ENCODE measurements at regions of chr2 and their contacts with region 1.

Region 1: GRCh38 chr2:192162392-192163042 is 32.2 kb downstream of the TMEFF2 start:
- DNase-seq: peak; percentile 65
- H3K4me3 Mint-ChIP-seq: no peak overlapping the region
- H3K27ac Mint-ChIP-seq: no peak overlapping the region
- H3K4me1 Mint-ChIP-seq: peaks cover 8% of the 10 kb centered on the region
- H3K27me3 Mint-ChIP-seq: peaks cover 10% of the 10 kb centered on the region

Region 2: DNA sequence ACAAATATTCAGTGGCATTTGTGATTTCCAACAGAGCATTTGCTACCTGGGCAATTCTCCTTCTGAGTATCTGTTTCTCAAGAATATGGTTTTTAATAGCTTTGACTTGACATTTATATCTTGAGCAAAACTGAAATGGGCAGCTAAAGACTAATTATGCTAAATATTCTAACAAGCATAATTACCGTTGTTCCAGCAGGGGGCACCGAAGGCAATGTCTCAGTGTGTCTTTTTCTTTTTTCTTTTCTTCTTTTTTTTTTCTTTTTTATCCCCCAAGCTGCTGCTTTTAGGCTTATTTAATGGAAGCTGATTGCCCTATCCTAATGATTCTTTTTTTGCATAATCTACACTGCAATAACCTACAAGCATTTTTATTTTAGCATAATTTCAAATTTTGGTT is 623.4 kb before region 1 on chr2:
- CTCF ChIA-PET with region 1: interaction called, 22 read pairs
- POLR2A ChIA-PET with region 1: no interaction called
- intact Hi-C with region 1: no loop called
- DNase-seq: peak; percentile 33
- H3K4me3 Mint-ChIP-seq: no peak overlapping the region
- H3K27ac Mint-ChIP-seq: no peak overlapping the region
- H3K4me1 Mint-ChIP-seq: no peaks in the 10 kb centered on the region
- H3K27me3 Mint-ChIP-seq: no peaks in the 10 kb centered on the region

Region 3: GRCh38 chr2:191566344-191566743 is 596.2 kb before region 1 on chr2:
- CTCF ChIA-PET with region 1: interaction called, 149 read pairs
- POLR2A ChIA-PET with region 1: no interaction called
- intact Hi-C with region 1: loop called (anchors 1 kb)
- DNase-seq: peak; percentile 75
- H3K4me3 Mint-ChIP-seq: no peak overlapping the region
- H3K27ac Mint-ChIP-seq: no peak overlapping the region
- H3K4me1 Mint-ChIP-seq: peaks cover 21% of the 10 kb centered on the region
- H3K27me3 Mint-ChIP-seq: peaks cover 4% of the 10 kb centered on the region

Region 4: GRCh38 chr2:191758518-191759507 is 403.7 kb before region 1 on chr2:
- CTCF ChIA-PET with region 1: interaction called, 31 read pairs
- POLR2A ChIA-PET with region 1: no interaction called
- intact Hi-C with region 1: loop called (anchors 5 kb)
- DNase-seq: peak; percentile 64
- H3K4me3 Mint-ChIP-seq: no peak overlapping the region
- H3K27ac Mint-ChIP-seq: no peak overlapping the region
- H3K4me1 Mint-ChIP-seq: peaks cover 3% of the 10 kb centered on the region
- H3K27me3 Mint-ChIP-seq: peaks cover 2% of the 10 kb centered on the region

Region 5: DNA sequence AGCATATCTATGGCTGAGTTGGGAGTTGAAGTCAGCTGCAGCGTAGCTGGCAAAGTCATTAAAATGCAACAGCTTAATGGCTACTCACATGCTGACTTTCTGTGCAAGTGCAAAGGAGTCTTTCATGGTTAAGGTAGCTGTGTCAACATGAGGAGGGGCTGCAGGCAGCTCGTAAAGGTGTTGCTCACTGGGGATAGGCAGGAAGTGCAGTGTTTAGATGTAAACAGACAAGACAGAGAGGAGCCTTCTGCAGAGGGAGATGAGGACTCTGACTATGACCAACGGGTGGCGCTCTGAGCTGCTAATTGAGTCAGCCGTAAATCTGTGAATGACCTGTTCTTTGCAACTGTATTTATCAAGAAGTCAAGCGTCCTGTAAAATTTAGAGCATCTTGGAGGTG is 293.3 kb before region 1 on chr2:
- CTCF ChIA-PET with region 1: interaction called, 16 read pairs
- POLR2A ChIA-PET with region 1: no interaction called
- intact Hi-C with region 1: no loop called
- DNase-seq: peak; percentile 13
- H3K4me3 Mint-ChIP-seq: no peak overlapping the region
- H3K27ac Mint-ChIP-seq: no peak overlapping the region
- H3K4me1 Mint-ChIP-seq: no peaks in the 10 kb centered on the region
- H3K27me3 Mint-ChIP-seq: peaks cover 16% of the 10 kb centered on the region

Region 6: GRCh38 chr2:192123847-192124246 is 38.7 kb before region 1 on chr2:
- CTCF ChIA-PET with region 1: no interaction called
- POLR2A ChIA-PET with region 1: no interaction called
- intact Hi-C with region 1: no loop called
- DNase-seq: no peak
- H3K4me3 Mint-ChIP-seq: no peak overlapping the region
- H3K27ac Mint-ChIP-seq: no peak overlapping the region
- H3K4me1 Mint-ChIP-seq: no peaks in the 10 kb centered on the region
- H3K27me3 Mint-ChIP-seq: peaks cover 3% of the 10 kb centered on the region

Region 7: GRCh38 chr2:192148620-192149321 is 13.7 kb before region 1 on chr2:
- CTCF ChIA-PET with region 1: interaction called, 12 read pairs
- POLR2A ChIA-PET with region 1: no interaction called
- intact Hi-C with region 1: no loop called
- DNase-seq: no peak
- H3K4me3 Mint-ChIP-seq: no peak overlapping the region
- H3K27ac Mint-ChIP-seq: no peak overlapping the region
- H3K4me1 Mint-ChIP-seq: no peaks in the 10 kb centered on the region
- H3K27me3 Mint-ChIP-seq: peaks cover 6% of the 10 kb centered on the region

Region 8: DNA sequence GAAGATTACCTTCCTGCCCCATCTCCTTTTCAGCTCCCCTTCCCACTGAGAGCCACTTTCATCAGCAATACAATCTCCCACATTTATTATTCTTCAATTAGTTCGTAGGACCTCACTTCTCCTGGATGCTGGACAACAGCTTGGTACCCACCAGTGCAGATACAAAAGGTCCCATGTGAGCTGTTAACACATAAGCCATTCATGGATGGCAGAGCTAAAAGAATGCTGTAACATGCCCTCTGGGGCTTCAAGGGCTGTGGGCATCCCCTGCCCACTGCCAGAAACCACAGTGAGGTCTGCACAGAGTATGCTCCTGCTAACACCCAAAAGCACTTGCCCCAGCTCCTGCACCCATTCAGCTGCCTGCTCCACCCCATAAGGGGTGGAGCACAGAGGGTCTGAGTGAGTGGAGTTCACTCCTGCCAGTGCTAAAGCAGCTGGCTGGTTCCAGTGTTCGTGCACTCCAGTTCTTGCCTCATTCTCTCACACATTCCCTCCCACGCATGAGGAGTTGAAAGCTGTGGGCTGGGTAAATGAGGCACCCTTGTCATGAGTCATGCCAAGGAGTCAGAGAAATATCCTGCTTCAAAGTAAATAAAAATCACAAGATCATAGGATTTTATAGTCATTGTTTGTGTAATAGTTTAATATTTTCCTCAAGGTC is 338.2 kb after region 1 on chr2:
- CTCF ChIA-PET with region 1: no interaction called
- POLR2A ChIA-PET with region 1: no interaction called
- intact Hi-C with region 1: no loop called
- DNase-seq: peak; percentile 53
- H3K4me3 Mint-ChIP-seq: no peak overlapping the region
- H3K27ac Mint-ChIP-seq: no peak overlapping the region
- H3K4me1 Mint-ChIP-seq: peaks cover 5% of the 10 kb centered on the region
- H3K27me3 Mint-ChIP-seq: no peaks in the 10 kb centered on the region